Activated naive CD4-positive, alpha-beta T cell treated with anti-CD3 and anti-CD28 coated beads for 36 hours (primary cell): ENCODE measurements at regions of chr4 and their contacts with region 1.

Region 1: GRCh38 chr4:25439918-25440477 is 62.9 kb downstream of the ANAPC4 start:
- DNase-seq: peak; percentile 77
- H3K4me3 Mint-ChIP-seq: no peak overlapping the region
- H3K27ac Mint-ChIP-seq: no peak overlapping the region
- H3K4me1 Mint-ChIP-seq: no peaks in the 10 kb centered on the region
- H3K27me3 Mint-ChIP-seq: no peaks in the 10 kb centered on the region

Region 2: DNA sequence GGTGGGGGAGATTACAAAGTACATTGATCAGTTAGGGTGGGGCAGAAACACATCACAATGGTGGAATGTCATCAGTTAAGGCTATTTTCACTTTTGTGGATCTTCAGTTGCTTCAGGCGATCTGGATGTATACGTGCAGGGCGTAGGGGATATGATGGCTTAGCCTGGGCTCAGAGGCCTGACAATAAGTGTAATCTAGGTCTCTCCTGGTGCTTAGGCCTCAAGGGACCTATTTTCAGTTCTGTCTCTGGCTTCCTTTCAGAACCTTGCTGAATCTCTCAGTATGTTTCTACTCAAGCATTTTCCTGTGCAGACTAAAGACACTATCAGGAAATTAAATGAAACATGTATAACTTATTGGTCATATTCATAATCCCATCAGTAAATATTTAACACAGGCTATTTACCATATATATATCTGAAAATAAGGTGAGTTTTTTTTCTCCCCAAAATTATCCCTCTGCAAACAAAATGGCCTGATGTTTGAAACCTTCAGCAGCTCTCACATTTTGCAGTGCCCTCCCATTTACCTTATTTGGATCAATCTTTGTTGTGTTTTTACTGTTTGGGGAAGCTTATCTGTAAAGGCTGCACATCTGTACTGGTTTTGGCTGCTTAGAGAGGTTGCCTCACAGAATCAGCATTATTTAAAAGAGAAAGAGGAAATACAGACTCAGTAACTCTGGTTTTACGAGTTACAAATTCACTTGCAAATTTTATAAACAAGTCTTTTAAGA is 129.8 kb before region 1 on chr4:
- CTCF ChIA-PET with region 1: no interaction called
- intact Hi-C with region 1: no loop called
- DNase-seq: no peak
- H3K4me3 Mint-ChIP-seq: no peak overlapping the region
- H3K27ac Mint-ChIP-seq: no peak overlapping the region
- H3K4me1 Mint-ChIP-seq: peaks cover 15% of the 10 kb centered on the region
- H3K27me3 Mint-ChIP-seq: peaks cover 12% of the 10 kb centered on the region

Region 3: GRCh38 chr4:25654971-25655963 is 215.3 kb after region 1 on chr4 and contains the start of gene SLC34A2:
- CTCF ChIA-PET with region 1: no interaction called
- intact Hi-C with region 1: loop called (anchors 10 kb)
- DNase-seq: no peak
- H3K4me3 Mint-ChIP-seq: no peak within 1 kb of the TSS
- H3K27ac Mint-ChIP-seq: no peak within 1 kb of the TSS
- H3K4me1 Mint-ChIP-seq: peaks cover 3% of the 10 kb centered on the region
- H3K27me3 Mint-ChIP-seq: peaks cover 33% of the 10 kb centered on the region
- total RNA-seq, gene SLC34A2: not detected

Region 4: DNA sequence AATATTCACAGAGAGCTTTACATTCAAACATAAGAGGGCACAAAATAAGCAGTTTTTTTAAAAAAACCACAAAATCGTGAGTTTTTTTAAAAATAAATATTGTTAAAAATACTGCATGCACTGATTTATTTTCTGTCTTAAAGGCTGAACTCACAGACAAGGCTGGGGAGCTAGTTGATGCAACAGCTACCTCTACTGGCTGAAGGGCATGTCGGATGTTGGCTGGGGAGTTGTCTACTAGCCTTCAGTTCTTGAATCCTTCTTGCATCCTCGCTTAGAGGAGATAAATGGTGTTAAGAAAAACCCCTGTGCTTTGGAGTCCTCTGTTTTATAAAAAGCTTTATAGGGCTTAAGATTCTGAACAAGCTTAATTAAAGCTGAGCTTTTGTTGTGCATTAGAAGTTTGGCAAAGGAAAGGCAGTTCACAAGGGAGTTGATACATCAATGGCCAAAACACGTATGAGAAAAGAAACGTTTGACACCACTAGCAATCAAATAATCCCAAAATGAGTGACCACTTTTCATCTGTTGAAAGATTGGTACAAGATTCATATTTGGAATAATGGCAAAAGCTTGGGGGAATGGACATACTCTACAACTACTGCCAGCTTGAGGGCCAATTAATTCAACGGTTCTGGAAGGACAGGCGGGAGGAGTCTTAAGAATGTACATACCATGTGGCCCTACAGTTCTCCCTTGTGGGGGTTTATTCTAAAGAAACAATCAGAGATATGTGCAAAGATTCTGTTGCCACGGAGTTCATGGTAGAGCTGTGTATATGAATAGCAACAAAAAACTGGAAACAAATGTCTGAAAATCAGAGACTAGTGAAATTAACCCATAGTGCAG is 328.1 kb after region 1 on chr4:
- CTCF ChIA-PET with region 1: interaction called, 3 read pairs
- intact Hi-C with region 1: loop called (anchors 1 kb)
- DNase-seq: peak; percentile 45
- H3K4me3 Mint-ChIP-seq: no peak overlapping the region
- H3K27ac Mint-ChIP-seq: no peak overlapping the region
- H3K4me1 Mint-ChIP-seq: no peaks in the 10 kb centered on the region
- H3K27me3 Mint-ChIP-seq: no peaks in the 10 kb centered on the region

Region 5: GRCh38 chr4:25981749-25982148 is 541.8 kb after region 1 on chr4:
- CTCF ChIA-PET with region 1: no interaction called
- intact Hi-C with region 1: loop called (anchors 10 kb)
- DNase-seq: no peak
- H3K4me3 Mint-ChIP-seq: no peak overlapping the region
- H3K27ac Mint-ChIP-seq: no peak overlapping the region
- H3K4me1 Mint-ChIP-seq: no peaks in the 10 kb centered on the region
- H3K27me3 Mint-ChIP-seq: no peaks in the 10 kb centered on the region